Naive thymus-derived CD4-positive, alpha-beta T cell (primary cell): ENCODE measurements at regions of chr11 and their contacts with region 1.

Region 1: DNA sequence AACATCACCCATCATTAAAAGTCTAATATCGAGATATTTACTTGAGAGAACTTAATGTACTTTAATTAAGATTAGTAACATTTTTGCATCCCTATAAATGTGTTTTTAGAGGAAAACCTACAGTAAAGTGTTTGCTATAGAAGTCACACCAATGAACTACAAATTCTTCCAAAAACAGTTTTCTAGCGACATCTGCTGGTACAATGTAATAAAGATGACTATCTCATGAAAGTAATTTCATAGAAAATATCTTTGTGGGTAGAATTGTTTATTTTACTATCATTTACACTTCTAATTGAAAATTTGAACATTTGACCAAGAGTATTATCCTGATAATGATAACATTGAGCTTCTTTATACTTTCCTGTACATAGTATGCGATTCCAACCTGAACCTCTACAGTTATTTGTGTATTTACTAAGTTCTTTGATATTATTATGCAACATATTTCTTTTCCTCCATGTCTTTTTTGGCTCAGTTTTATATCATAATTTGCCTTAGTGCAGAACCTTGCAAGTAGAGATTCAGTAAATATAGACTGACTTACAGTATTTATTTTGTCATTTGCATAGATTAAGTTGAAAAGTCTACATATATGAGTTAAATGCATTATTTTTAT is 252.7 kb downstream of the TMEM135 start:
- DNase-seq: peak in 7 of 9 donors; percentile 1 to 52 (median 44)
- ATAC-seq: no peak
- H3K4me3 ChIP-seq: no peak overlapping the region
- H3K4me3 Mint-ChIP-seq: no peak overlapping the region
- H3K27ac ChIP-seq: no peak overlapping the region
- H3K27ac Mint-ChIP-seq: no peak overlapping the region
- H3K4me1 ChIP-seq: no peaks in the 10 kb centered on the region
- H3K4me1 Mint-ChIP-seq: no peaks in the 10 kb centered on the region
- H3K27me3 ChIP-seq: no peaks in the 10 kb centered on the region
- H3K27me3 Mint-ChIP-seq: no peaks in the 10 kb centered on the region

Region 2: DNA sequence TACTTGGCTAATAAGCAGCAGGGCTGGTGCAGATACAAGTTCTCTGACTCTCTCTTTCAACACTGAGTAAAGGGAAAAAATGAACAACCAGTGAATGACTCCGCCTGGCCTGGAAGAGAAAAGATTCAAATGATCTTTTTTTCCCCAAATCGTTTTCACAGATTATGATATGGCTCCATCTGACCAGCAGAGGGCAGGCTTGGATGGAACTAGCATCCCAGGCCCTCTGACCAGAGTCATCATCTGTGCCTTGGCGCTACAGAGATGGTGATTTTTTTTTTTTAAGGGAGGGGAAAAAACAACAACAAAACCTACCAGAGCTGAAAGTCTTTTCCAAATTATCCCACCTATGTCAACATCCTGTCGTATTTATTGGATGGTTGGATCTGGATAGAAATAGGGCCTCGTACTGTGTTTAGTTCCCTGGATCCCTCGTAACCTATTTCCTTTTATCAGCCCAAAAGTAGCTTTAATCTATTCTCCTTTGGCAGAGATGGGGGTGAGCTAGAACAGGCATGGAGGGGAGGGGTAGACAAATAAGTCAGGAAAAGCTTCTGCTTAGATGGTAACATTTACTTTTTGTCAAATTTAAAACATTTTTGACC is 420.3 kb before region 1 on chr11:
- CTCF ChIA-PET with region 1: interaction called, 4 read pairs
- POLR2A ChIA-PET with region 1: no interaction called
- intact Hi-C with region 1: loop called (anchors 1 to 5 kb)
- DNase-seq: peak in 6 of 9 donors; percentile 3 to 44 (median 13)
- ATAC-seq: peak; percentile 76
- H3K4me3 ChIP-seq: no peak overlapping the region
- H3K4me3 Mint-ChIP-seq: no peak overlapping the region
- H3K27ac ChIP-seq: no peak overlapping the region
- H3K27ac Mint-ChIP-seq: no peak overlapping the region
- H3K4me1 ChIP-seq: no peaks in the 10 kb centered on the region
- H3K4me1 Mint-ChIP-seq: peaks cover 0 to 2% (median 0%) of the 10 kb centered on the region in 7 donors
- H3K27me3 ChIP-seq: no peaks in the 10 kb centered on the region
- H3K27me3 Mint-ChIP-seq: peaks cover 0 to 9% (median 0%) of the 10 kb centered on the region in 5 donors

Region 3: DNA sequence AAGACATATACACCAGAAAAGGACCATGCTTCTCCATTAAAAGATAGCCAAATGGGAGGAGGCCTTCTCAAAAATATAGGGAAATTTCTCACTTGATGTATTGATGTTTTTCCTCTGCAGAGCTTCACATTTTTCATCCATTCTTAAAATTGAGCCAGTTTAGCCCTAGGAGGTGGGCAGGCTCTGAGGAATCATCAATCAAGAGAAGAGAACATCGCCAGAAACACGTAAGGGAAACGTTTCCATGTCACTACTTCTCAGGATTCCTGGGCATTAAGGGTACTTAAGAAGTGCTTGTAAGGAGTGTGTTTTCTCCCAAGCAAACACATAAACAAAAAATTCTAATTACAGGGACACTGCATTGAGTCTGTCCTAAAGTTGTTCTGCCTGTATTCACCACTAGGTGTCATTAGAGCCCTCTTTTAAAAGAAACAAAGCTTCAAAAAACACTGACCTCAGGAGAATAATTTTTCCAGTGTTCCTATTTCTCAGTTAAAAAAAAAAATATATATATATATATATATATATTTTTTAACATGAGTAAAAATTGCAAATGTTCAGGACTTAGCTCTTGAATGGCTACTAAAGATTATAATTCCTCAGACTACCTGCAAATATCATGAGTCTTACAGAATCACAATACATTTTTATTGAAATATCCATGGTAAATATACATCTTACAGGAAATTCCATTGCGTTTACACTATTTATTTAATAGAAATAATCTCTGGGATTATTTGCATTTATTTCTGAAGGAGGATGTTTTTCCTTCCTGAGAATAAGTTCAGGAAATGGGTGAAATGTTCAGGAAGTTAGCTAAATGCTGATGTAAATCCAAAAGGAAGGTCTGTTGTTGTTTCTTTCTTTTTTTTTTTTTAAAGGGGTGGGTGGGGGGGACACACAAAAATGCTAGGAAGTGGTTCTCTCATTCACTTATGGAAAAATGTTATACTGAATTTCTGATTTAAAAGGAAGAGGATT is 351.2 kb before region 1 on chr11:
- CTCF ChIA-PET with region 1: interaction called, 18 read pairs
- POLR2A ChIA-PET with region 1: no interaction called
- intact Hi-C with region 1: loop called (anchors 1 kb)
- DNase-seq: peak in 4 of 9 donors; percentile 24 to 34 (median 28)
- ATAC-seq: peak; percentile 64
- H3K4me3 ChIP-seq: no peak overlapping the region
- H3K4me3 Mint-ChIP-seq: no peak overlapping the region
- H3K27ac ChIP-seq: no peak overlapping the region
- H3K27ac Mint-ChIP-seq: no peak overlapping the region
- H3K4me1 ChIP-seq: no peaks in the 10 kb centered on the region
- H3K4me1 Mint-ChIP-seq: peaks cover 0 to 2% (median 0%) of the 10 kb centered on the region in 7 donors
- H3K27me3 ChIP-seq: no peaks in the 10 kb centered on the region
- H3K27me3 Mint-ChIP-seq: peaks cover 0 to 9% (median 4%) of the 10 kb centered on the region in 5 donors

Region 4: DNA sequence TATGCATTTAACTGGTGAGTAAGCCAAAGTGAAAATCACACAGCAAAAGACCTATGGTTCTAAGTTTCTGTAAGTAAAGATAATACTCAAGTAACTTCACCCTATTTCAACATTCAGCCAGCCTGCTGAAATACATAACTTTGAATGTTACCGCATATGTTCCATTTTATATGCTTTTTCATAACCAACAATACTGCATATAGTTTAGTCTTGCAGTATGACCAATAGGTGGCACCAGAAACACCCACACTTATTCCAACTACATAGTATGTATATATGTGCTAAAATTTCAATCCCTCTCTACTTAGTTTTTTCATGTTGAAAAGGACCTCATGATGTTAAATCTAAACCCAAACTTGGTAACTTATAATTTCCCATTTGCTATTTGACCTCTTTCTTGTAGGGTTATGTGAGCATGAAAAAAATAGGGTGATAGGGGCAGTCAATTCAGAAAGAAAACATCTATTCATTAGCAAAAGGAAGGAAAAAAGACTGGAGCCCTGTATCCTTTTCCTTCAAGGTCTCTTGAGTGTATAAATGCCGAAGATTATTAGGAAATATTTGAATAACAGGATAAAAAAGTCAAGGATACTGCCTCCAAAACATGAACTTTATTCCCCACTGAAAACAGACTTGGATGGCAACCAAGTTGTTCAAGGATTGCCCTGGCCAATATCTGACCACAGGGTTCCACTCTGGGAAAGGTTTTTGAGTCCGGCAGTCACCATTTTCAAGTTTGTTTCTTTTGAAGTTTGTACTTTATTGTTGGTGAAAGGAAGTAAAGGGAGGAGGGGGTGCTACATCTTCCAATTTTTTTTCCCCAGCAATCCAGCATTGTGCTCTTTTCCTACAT is 311.4 kb before region 1 on chr11:
- CTCF ChIA-PET with region 1: interaction called, 3 read pairs
- POLR2A ChIA-PET with region 1: no interaction called
- intact Hi-C with region 1: loop called (anchors 1 kb)
- DNase-seq: peak in 3 of 9 donors; percentile 22 to 41 (median 27)
- ATAC-seq: peak; percentile 64
- H3K4me3 ChIP-seq: no peak overlapping the region
- H3K4me3 Mint-ChIP-seq: no peak overlapping the region
- H3K27ac ChIP-seq: no peak overlapping the region
- H3K27ac Mint-ChIP-seq: no peak overlapping the region
- H3K4me1 ChIP-seq: no peaks in the 10 kb centered on the region
- H3K4me1 Mint-ChIP-seq: no peaks in the 10 kb centered on the region
- H3K27me3 ChIP-seq: no peaks in the 10 kb centered on the region
- H3K27me3 Mint-ChIP-seq: peaks cover 0 to 7% (median 3%) of the 10 kb centered on the region in 5 donors

Region 5: GRCh38 chr11:86990515-86990914 is 299.9 kb before region 1 on chr11:
- CTCF ChIA-PET with region 1: no interaction called
- POLR2A ChIA-PET with region 1: no interaction called
- intact Hi-C with region 1: loop called (anchors 1 kb)
- DNase-seq: no peak
- ATAC-seq: no peak
- H3K4me3 ChIP-seq: no peak overlapping the region
- H3K4me3 Mint-ChIP-seq: no peak overlapping the region
- H3K27ac ChIP-seq: no peak overlapping the region
- H3K27ac Mint-ChIP-seq: no peak overlapping the region
- H3K4me1 ChIP-seq: no peaks in the 10 kb centered on the region
- H3K4me1 Mint-ChIP-seq: no peaks in the 10 kb centered on the region
- H3K27me3 ChIP-seq: no peaks in the 10 kb centered on the region
- H3K27me3 Mint-ChIP-seq: peaks cover 0 to 23% (median 0%) of the 10 kb centered on the region in 5 donors

Region 6: GRCh38 chr11:87384078-87384729 is 93.8 kb after region 1 on chr11:
- CTCF ChIA-PET with region 1: no interaction called
- POLR2A ChIA-PET with region 1: no interaction called
- intact Hi-C with region 1: no loop called
- DNase-seq: no peak
- ATAC-seq: no peak
- H3K4me3 ChIP-seq: no peak overlapping the region
- H3K4me3 Mint-ChIP-seq: no peak overlapping the region
- H3K27ac ChIP-seq: no peak overlapping the region
- H3K27ac Mint-ChIP-seq: no peak overlapping the region
- H3K4me1 ChIP-seq: no peaks in the 10 kb centered on the region
- H3K4me1 Mint-ChIP-seq: no peaks in the 10 kb centered on the region
- H3K27me3 ChIP-seq: no peaks in the 10 kb centered on the region
- H3K27me3 Mint-ChIP-seq: peaks cover 0 to 34% (median 23%) of the 10 kb centered on the region in 5 donors